CD14-positive monocyte (primary cell): ENCODE measurements at regions of chr3 and their contacts with region 1.

Region 1: GRCh38 chr3:132522353-132522752 is 74.7 kb upstream of the ACKR4 start:
- DNase-seq: no peak
- H3K4me3 ChIP-seq: no peak overlapping the region
- H3K4me3 Mint-ChIP-seq: no peak overlapping the region
- H3K27ac ChIP-seq: no peak overlapping the region
- H3K27ac Mint-ChIP-seq: no peak overlapping the region
- H3K4me1 ChIP-seq: no peaks in the 10 kb centered on the region
- H3K4me1 Mint-ChIP-seq: no peaks in the 10 kb centered on the region
- H3K27me3 ChIP-seq: no peaks in the 10 kb centered on the region
- H3K27me3 Mint-ChIP-seq: no peaks in the 10 kb centered on the region
- CTCF ChIP-seq: no peak

Region 2: GRCh38 chr3:132641837-132642538 is 119.6 kb after region 1 on chr3:
- intact Hi-C with region 1: no loop called
- DNase-seq: peak; percentile 5 to 45 (median 31)
- H3K4me3 ChIP-seq: no peak overlapping the region
- H3K4me3 Mint-ChIP-seq: no peak overlapping the region
- H3K27ac ChIP-seq: no peak overlapping the region
- H3K27ac Mint-ChIP-seq: no peak overlapping the region
- H3K4me1 ChIP-seq: no peaks in the 10 kb centered on the region
- H3K4me1 Mint-ChIP-seq: peaks cover 8% of the 10 kb centered on the region
- H3K27me3 ChIP-seq: no peaks in the 10 kb centered on the region
- H3K27me3 Mint-ChIP-seq: peaks cover 0 to 1% (median 0%) of the 10 kb centered on the region in 3 donors
- CTCF ChIP-seq: peak; percentile 80

Region 3: DNA sequence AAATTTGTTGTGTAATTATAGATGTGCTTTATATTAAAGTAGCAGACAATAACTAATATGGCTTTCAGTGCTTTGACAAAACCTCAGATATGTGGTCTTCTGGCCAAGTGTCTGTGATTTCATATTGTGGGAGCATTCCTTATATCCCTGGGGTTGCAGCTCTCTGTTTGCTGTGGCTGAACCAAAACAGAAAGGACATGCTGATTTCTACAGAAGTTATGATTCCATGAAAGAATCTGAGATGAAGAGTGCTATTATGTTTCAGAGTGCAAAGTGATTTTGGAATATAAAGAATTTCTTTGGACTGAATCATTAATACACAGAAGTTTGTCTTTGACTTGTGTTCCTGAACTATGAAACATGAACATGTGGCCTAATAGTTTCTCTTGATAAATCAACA is 1087.7 kb after region 1 on chr3:
- intact Hi-C with region 1: loop called in 1 of 2 experiments (anchors 10 kb)
- DNase-seq: no peak
- H3K4me3 ChIP-seq: no peak overlapping the region
- H3K4me3 Mint-ChIP-seq: no peak overlapping the region
- H3K27ac ChIP-seq: no peak overlapping the region
- H3K27ac Mint-ChIP-seq: no peak overlapping the region
- H3K4me1 ChIP-seq: no peaks in the 10 kb centered on the region
- H3K4me1 Mint-ChIP-seq: no peaks in the 10 kb centered on the region
- H3K27me3 ChIP-seq: no peaks in the 10 kb centered on the region
- H3K27me3 Mint-ChIP-seq: no peaks in the 10 kb centered on the region
- CTCF ChIP-seq: no peak